ENCODE measurements at regions of chr17 and their contacts with region 1.

Region 1: GRCh38 chr17:4709794-4710692 is at the start of gene ARRB2:
- DNase-seq: peak; percentile 97
- ATAC-seq: peak; percentile 77
- total RNA-seq, gene ARRB2: 27.2 to 45.1 TPM

Region 2: GRCh38 chr17:4849011-4849536 is 139.0 kb after region 1 on chr17:
- intact Hi-C with region 1: no loop called
- DNase-seq: no peak
- ATAC-seq: no peak

Region 3: DNA sequence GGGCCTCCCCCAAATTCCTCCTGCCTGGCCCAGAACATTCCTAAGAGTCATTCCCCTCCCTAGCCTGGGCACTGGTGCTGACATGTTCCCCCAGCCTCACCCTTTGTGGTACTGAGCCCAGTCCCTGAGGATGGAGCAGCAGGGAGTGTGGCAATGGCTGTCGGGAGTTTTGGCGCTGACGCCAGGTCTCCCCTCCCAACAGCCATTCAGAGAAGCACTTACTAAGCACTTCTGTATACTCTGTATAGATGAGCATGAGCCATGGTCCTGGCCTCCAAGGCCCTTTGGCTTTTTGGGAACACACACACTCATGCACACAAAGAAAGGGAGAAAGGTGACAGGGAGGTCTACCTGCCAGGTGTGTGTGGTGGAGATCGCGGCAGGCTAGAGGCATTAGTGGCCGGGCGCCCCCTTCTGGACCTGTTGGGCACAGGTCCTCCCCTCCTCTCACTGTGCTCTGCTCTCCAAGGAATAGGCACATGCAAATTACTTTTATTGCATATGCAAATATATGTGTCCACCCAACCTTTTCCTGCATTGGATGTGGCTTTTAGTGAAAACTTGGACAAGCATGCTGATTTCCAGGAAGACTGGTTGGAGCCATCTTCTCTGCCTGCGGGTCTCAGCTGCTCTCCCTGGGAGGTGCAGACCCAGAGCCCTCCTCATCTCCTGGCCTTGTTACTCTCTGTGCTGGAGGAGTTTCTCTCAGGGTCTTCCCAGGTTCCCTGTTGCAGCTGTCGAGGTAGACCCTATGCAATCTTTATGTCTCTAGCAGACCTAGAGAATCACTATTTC is 171.9 kb after region 1 on chr17:
- intact Hi-C with region 1: loop called in 1 of 2 experiments (anchors 10 kb)
- DNase-seq: peak in 1 of 2 donors; percentile 81
- ATAC-seq: peak; percentile 94